Sciatic nerve (tissue), 2 donors: ENCODE measurements at regions of chr2 and their contacts with region 1.

Region 1: DNA sequence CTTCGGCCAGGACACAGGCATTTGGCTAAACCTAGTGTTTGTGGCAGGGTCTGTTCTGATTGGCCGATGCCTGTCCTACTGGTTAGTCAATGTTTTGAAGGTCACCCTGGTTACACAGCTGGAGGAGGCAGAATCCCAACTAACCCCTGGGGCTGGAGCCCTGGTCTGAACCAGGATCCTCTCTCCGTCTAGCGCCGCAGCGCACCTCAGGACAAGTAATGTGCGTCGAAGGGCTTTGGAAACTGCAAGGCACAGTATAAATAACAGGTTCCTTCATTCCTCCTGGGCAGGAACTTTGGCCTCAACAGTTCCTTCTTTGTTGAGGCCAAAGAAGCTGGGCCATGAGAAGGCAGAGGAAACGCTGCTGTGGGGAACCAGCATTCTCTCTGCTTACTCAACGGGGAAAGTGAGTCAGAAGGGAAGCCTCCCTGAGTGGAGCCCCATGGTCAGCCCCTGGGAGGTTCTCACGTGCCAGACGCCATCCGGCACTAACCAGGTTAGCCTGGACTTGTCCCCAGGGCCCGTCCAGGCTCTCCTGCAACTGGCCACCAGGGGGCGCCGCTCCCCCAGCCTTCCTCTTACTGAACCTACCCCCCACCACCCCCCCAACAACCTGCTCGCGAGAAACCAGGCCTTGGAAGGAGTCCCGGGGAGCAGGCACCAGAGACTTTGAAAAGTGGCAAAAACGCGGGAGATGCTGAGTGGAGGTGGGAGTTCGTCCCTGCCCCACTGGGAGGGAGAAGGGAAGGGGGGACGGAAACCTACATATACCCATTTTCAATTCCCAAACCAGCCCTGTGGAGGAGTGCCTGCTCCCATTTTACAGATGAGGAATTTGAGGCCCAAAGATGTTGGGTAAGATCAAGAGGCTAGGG is 19.8 kb downstream of the TEX44 start:
- DNase-seq: peak; percentile 96
- ATAC-seq: peak; percentile 86

Region 2: GRCh38 chr2:231489990-231490389 is 122.4 kb before region 1 on chr2:
- intact Hi-C with region 1: no loop called
- DNase-seq: no peak
- ATAC-seq: no peak

Region 3: GRCh38 chr2:231601349-231602229 is 10.8 kb before region 1 on chr2:
- intact Hi-C with region 1: no loop called
- DNase-seq: peak; percentile 93
- ATAC-seq: peak; percentile 35

Region 4: GRCh38 chr2:231668981-231669380 is 56.6 kb after region 1 on chr2:
- intact Hi-C with region 1: loop called (anchors 2 kb)
- DNase-seq: no peak
- ATAC-seq: no peak

Region 5: GRCh38 chr2:231706731-231707624 is 94.6 kb after region 1 on chr2:
- intact Hi-C with region 1: loop called (anchors 5 kb)
- DNase-seq: peak; percentile 99
- ATAC-seq: peak; percentile 86